Ascending aorta (tissue), 2 donors: ENCODE measurements at regions of chr20 and their contacts with region 1.

Region 1: DNA sequence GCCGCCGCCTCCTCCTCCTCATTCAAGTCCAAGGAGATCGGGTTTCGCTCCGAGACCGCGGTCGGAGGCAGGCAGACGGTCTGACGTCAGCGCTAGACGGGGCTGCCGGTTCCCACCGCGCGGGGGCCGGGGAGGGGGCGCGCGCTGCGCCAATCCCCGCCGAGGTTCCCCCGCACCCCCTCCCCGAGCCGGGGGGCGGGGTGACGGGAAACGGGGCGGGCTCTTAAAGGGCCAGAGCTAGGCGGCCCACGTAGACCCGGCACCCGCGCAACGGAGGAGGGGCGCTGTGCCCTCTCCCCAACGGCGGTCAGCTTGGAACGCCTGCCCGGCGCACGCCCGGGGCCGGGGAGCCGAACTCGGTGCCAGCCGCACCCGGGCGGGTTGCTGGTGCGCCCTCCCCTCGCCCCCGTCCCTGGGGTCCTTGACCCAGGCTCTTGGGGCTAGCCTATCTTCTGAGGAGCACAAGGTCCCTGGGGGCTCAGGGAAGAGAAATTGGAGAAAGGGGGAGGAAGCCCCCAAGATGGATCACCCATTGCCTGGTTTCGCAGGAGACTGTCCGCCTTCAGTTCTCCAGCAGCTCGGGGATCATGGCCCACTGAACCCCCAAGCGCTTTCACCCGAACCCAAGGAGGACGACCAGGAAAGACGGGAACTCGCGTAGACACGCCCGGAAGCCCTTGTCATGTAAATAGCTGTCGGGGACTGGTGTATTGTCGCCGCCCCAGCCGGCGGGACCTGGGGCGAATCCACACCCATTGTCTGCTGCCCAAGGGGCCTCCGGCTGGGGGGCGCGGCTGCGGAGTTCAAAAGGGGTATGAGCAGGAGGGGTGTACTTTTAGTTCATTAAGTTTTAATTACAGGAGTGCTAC is at the start of gene PMEPA1:
- DNase-seq: peak; percentile 81 to 97
- H3K4me3 ChIP-seq: peak within 1 kb of the TSS; percentile 73 to 79
- H3K27ac ChIP-seq: peak within 1 kb of the TSS; percentile 94 to 97
- H3K4me1 ChIP-seq: peaks cover 23 to 50% of the 10 kb centered on the region in 2 donors
- H3K27me3 ChIP-seq: no peaks in the 10 kb centered on the region
- CTCF ChIP-seq: no peak
- total RNA-seq, gene PMEPA1: 56.8 TPM

Region 2: DNA sequence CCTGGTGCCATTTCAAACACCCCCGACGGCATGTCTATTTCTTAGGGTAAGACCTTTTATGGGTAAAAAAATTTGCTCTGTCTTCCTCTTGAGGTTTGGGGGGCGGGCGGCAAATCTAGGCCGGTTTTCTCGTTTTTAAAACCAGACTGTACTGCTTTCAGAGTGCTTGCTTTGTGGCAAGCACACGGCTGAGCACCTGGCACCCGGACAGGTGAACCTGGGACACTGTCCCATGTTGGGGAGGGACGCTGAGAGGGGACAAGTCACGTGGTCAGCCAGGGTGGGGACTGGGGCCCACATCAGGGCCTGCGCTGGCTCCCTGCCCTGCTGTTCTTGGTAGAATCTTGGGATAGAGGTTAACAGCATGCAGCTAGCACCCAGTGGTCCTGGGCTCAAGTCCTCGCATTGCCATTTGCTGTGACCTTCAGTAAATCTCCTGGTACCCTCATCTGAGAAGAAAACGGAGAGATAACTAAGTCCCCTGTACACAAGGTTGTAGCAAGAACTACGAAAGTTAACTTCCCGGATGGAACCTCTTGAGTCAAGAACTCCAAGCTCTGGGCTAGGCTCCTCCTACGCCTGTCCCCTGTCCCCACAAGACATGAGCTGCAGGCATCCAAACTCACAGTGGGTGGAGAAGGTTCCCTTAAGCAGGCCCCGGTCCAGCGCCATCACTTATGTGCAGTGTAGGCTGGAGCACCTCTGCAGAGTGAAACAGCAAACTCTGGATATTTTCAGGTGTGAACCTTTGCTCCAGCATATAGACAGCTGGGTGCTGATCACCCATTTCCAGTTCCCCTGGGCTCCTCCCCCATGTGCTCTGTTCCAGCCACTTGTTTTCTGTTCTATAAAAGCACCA is 42.0 kb before region 1 on chr20:
- intact Hi-C with region 1: loop called (anchors 1 kb)
- DNase-seq: no peak
- H3K4me3 ChIP-seq: no peak overlapping the region
- H3K27ac ChIP-seq: peak overlapping the region; percentile 17 to 32
- H3K4me1 ChIP-seq: peaks cover 10 to 71% of the 10 kb centered on the region in 2 donors
- H3K27me3 ChIP-seq: no peaks in the 10 kb centered on the region
- CTCF ChIP-seq: no peak

Region 3: DNA sequence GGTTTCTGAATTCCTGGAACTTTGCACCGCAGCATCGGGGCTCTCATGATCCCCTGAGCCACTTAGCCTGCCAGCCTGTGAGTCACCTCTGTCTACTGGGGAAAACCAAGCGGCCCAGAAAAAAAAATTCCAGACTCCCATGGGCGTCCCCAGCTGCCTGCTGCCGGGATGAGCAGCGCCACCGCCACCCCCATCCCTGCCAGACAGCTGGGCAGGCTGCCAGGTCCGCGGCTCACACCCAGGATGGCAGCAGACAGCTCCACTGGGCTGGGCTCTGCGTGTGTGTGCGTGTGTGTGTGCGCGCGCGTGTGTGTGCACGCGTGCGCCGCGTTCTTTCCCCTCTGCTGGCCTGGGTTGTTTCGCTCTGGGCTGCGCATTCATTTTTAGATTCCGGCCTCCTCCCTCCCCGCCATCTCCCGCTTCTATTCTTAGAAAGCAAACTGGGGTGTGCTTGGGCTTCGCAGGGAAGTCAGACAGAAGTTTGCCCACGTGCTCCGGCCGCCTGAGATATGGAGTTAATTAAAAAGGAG is 38.5 kb after region 1 on chr20:
- intact Hi-C with region 1: loop called (anchors 1 kb)
- DNase-seq: peak; percentile 85 to 94
- H3K4me3 ChIP-seq: peak overlapping the region; percentile 39 to 50
- H3K27ac ChIP-seq: peak overlapping the region; percentile 94 to 99
- H3K4me1 ChIP-seq: peaks cover 6 to 25% of the 10 kb centered on the region in 2 donors
- H3K27me3 ChIP-seq: no peaks in the 10 kb centered on the region
- CTCF ChIP-seq: no peak

Region 4: DNA sequence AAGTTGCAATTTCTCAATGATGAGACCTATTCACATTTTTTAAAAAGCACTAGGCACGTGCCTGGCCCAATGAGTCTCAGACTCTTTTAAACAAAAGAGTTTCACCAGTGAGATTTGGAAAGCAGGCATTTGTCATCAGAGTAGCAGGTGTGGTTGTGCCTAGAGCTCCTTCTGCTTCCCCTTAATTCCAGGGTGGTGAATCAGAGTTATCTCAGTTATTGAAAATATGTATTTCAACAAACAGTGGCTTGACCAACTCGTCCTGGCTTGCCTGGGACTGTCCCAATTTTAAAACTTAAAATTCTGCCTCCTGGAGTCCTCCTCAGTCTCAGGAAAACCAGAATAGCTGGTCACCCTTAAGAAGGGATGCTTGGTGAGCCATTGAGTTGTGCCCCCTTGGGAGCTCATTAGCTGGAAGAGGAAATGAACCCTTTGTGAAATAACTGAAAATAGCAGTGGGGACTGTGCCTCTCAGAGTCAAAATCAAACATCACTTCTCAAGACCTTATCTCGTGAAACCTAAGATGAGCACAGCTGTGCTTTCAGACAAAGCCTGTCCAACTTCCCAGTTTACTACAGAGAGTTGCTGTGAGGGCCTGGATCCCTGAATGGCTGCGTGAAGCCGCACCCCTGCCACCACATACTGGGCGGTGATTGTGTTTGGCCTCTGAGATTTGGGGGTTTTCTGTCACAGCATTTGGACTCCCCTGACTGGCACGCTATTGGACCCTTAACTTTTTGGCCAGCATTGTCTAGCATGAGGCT is 402.0 kb after region 1 on chr20:
- intact Hi-C with region 1: loop called (anchors 2 kb)
- DNase-seq: no peak
- H3K4me3 ChIP-seq: no peak overlapping the region
- H3K27ac ChIP-seq: peak overlapping the region; percentile 35 to 63
- H3K4me1 ChIP-seq: peaks cover 3 to 14% of the 10 kb centered on the region in 2 donors
- H3K27me3 ChIP-seq: no peaks in the 10 kb centered on the region
- CTCF ChIP-seq: no peak